Activated naive CD4-positive, alpha-beta T cell treated with anti-CD3 and anti-CD28 coated beads for 36 hours (primary cell): ENCODE measurements at regions of chr2 and their contacts with region 1.

Region 1: GRCh38 chr2:191078165-191078867 is 64.3 kb upstream of the STAT1 start:
- DNase-seq: no peak
- H3K4me3 Mint-ChIP-seq: peak overlapping the region; percentile 61
- H3K27ac Mint-ChIP-seq: peak overlapping the region; percentile 82
- H3K4me1 Mint-ChIP-seq: peaks cover 54% of the 10 kb centered on the region
- H3K27me3 Mint-ChIP-seq: no peaks in the 10 kb centered on the region

Region 2: GRCh38 chr2:191059308-191059707 is 19.0 kb before region 1 on chr2:
- CTCF ChIA-PET with region 1: no interaction called
- intact Hi-C with region 1: loop called (anchors 1 kb)
- DNase-seq: peak; percentile 27
- H3K4me3 Mint-ChIP-seq: no peak overlapping the region
- H3K27ac Mint-ChIP-seq: no peak overlapping the region
- H3K4me1 Mint-ChIP-seq: peaks cover 63% of the 10 kb centered on the region
- H3K27me3 Mint-ChIP-seq: no peaks in the 10 kb centered on the region

Region 3: GRCh38 chr2:191066197-191066918 is 12.0 kb before region 1 on chr2:
- CTCF ChIA-PET with region 1: no interaction called
- intact Hi-C with region 1: loop called (anchors 1 kb)
- DNase-seq: peak; percentile 41
- H3K4me3 Mint-ChIP-seq: peak overlapping the region; percentile 25
- H3K27ac Mint-ChIP-seq: peak overlapping the region; percentile 76
- H3K4me1 Mint-ChIP-seq: peaks cover 77% of the 10 kb centered on the region
- H3K27me3 Mint-ChIP-seq: no peaks in the 10 kb centered on the region

Region 4: GRCh38 chr2:191103774-191104173 is 25.5 kb after region 1 on chr2:
- CTCF ChIA-PET with region 1: interaction called, 5 read pairs
- intact Hi-C with region 1: loop called (anchors 1 kb)
- DNase-seq: no peak
- H3K4me3 Mint-ChIP-seq: no peak overlapping the region
- H3K27ac Mint-ChIP-seq: peak overlapping the region; percentile 61
- H3K4me1 Mint-ChIP-seq: peaks cover 69% of the 10 kb centered on the region
- H3K27me3 Mint-ChIP-seq: no peaks in the 10 kb centered on the region